Heart right ventricle (tissue), 16 donors: ENCODE measurements at regions of chr17 and their contacts with region 1.

Region 1: GRCh38 chr17:67942810-67943209 is 53.5 kb downstream of the C17orf58 start:
- DNase-seq: no peak
- ATAC-seq: no peak
- H3K4me3 ChIP-seq: no peak overlapping the region
- H3K27ac ChIP-seq: no peak overlapping the region
- H3K4me1 ChIP-seq: no peaks in the 10 kb centered on the region
- H3K27me3 ChIP-seq: no peaks in the 10 kb centered on the region
- CTCF ChIP-seq: peak in 8 of 9 donors; percentile 10 to 52 (median 36)

Region 2: DNA sequence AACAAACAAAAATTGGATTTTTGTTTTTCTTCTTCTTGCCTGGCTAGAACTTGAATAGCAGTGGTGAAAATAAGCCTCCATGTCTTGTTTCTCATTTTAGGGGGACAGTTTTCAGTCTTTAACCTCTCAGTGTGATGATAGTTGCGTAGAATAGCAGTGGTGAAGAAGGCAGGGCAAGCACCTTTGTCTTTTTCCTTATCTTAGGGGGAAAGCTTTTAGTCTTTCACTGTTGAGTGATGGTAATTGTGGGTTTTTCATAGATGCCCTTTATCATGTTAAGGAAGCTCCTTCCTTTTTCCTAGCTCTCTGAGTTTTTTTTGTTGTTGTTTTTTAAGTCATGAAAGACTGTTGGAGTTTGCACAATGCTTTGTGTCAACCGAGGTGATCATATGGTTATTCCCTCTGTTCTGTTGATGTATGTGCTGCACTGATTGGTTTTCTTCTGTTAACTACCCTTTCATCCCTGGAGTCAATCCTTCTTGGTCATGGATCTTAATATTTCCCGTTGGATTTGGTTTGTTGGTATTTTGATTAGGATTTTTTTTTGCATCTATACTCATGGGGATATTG is 209.4 kb before region 1 on chr17:
- intact Hi-C with region 1: loop called in 1 of 10 experiments (anchors 10 kb)
- DNase-seq: no peak
- ATAC-seq: no peak
- H3K4me3 ChIP-seq: no peak overlapping the region
- H3K27ac ChIP-seq: no peak overlapping the region
- H3K4me1 ChIP-seq: no peaks in the 10 kb centered on the region
- H3K27me3 ChIP-seq: no peaks in the 10 kb centered on the region
- CTCF ChIP-seq: no peak